SK-N-SH (cell line): ENCODE measurements at regions of chr4 and their contacts with region 1.

Region 1: DNA sequence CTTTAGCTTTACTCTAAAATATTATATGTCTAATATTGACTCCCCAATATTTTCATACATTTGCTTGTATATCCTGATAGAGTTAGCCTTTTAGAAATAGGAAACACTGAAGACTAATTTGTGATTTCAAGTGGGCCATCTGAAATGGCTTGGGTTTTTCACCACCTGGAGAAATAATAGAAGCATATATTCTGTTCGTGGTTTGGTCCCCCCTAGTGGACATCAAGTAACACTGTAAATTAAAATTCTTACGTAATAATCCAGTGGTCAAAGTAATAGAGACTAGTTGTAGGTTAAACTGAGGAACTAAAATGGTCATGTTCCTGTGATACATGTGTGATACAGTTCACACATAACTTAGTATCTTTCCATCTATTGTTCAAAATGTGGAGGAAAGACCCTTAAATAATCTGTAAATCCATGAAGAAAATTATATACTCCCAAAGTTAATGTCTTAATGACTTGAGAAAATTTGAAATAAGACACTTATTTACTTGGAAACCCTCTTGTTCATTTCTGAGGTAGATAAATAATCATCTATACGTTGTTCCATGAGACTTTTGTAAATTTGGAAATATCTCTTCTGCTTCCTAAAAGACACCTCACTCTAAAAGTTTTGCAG is 79.8 kb upstream of the SMARCAD1 start:
- DNase-seq: peak; percentile 52
- H3K4me3 ChIP-seq: no peak overlapping the region
- H3K27ac ChIP-seq: no peak overlapping the region
- H3K4me1 ChIP-seq: no peaks in the 10 kb centered on the region
- H3K27me3 ChIP-seq: no peaks in the 10 kb centered on the region
- CTCF ChIP-seq: peak; percentile 78
- EP300 ChIP-seq: no peak
- RAD21 ChIP-seq: peak; percentile 68

Region 2: DNA sequence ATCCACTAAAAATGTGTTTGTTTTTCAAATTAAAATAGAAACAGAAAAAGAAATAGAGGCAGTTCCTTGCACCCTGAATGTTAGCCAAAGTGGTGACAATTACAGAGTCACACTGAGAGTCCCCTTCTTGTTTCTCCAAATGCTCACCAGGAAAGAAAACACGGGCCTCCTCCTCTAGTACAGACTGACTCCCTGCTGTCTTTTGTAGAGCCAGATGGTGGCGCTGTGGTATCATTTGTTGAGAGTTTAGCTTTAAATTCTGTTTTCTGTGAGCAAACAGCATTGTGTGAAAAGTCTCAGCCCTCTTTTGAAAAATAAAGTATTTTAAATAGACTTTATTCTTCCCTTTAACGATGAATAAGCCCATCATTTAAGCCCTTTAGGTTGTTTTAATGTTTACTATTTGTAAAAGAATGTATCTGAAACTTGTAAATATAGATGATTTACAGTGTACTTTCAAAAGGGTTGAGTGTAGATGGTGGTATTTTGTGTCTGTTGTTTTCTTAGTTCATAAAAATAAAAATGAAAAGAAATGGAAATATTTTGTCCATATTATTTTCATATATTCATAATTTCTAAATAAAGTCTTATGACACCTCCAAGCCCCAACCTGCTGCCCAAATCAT is 336.1 kb before region 1 on chr4:
- CTCF ChIA-PET with region 1: interaction called, 81 read pairs
- POLR2A ChIA-PET with region 1: no interaction called
- DNase-seq: peak; percentile 59
- H3K4me3 ChIP-seq: no peak overlapping the region; a peak in 1 of 4 replicates
- H3K27ac ChIP-seq: no peak overlapping the region
- H3K4me1 ChIP-seq: no peaks in the 10 kb centered on the region
- H3K27me3 ChIP-seq: peaks cover 7% of the 10 kb centered on the region
- CTCF ChIP-seq: peak; percentile 93
- EP300 ChIP-seq: no peak
- RAD21 ChIP-seq: peak; percentile 95

Region 3: DNA sequence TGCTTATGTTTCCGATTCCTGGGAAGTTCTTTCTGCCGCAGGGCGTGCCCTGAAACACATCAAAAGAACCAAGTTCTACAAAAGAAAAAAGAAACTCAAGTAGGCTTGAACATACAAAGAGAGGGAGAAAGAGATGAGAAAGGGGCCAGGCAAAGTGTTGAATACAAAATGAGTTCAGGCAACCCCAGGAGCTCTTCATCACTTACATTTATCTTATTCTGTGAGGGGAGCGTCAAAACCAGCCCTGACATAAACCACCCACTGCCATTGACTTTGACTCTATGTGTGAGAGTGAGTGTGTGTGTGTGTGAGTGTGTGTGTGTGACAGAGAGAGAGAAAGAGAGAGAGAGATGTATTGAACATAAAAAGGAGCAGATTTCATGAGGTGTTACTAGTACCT is 325.7 kb before region 1 on chr4:
- CTCF ChIA-PET with region 1: interaction called, 39 read pairs
- POLR2A ChIA-PET with region 1: no interaction called
- DNase-seq: no peak
- H3K4me3 ChIP-seq: no peak overlapping the region
- H3K27ac ChIP-seq: no peak overlapping the region
- H3K4me1 ChIP-seq: no peaks in the 10 kb centered on the region
- H3K27me3 ChIP-seq: no peaks in the 10 kb centered on the region
- CTCF ChIP-seq: no peak
- EP300 ChIP-seq: no peak
- RAD21 ChIP-seq: no peak

Region 4: DNA sequence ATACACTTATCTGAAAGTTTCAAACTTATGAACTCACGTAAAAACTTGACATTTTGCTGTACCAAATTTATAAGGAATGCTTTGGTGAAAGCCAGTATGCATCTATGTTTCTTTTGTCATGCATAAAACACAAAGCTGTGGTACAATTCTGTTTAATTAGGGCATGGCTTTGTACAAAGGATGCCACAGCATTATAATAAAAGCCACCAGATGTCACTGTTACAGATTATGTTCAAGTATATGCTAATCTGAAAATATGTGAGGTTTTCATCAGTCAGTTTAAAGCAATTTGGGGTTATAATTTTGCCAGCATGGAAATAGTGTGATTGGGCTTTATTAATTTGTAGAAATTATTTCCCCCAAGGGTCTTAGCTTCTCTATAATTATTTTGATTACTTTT is 230.3 kb before region 1 on chr4:
- CTCF ChIA-PET with region 1: interaction called, 75 read pairs
- POLR2A ChIA-PET with region 1: no interaction called
- DNase-seq: peak; percentile 35
- H3K4me3 ChIP-seq: no peak overlapping the region
- H3K27ac ChIP-seq: no peak overlapping the region
- H3K4me1 ChIP-seq: no peaks in the 10 kb centered on the region
- H3K27me3 ChIP-seq: no peaks in the 10 kb centered on the region
- CTCF ChIP-seq: peak; percentile 57
- EP300 ChIP-seq: no peak
- RAD21 ChIP-seq: peak; percentile 56

Region 5: DNA sequence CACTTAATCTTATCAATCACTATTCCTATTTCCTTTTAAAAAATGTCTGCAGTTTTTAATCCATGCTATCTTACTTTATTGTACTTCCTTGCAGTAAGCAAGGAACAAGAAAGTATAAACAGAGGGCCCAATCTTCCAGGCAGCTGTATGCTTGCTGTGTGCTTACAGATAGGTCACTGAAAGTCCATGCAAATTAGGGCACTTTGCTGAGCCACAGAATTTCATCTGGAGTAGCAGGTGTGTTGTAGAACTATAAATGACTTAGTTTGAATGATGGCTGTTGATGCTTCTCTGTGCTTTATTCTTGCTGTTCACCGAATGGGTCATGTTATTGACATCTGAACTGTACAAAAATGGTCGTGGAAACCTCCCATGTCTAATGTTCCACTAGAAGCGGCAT is 144.7 kb before region 1 on chr4:
- CTCF ChIA-PET with region 1: no interaction called
- POLR2A ChIA-PET with region 1: no interaction called
- DNase-seq: no peak
- H3K4me3 ChIP-seq: no peak overlapping the region
- H3K27ac ChIP-seq: no peak overlapping the region
- H3K4me1 ChIP-seq: no peaks in the 10 kb centered on the region; a peak in 1 of 4 replicates
- H3K27me3 ChIP-seq: no peaks in the 10 kb centered on the region
- CTCF ChIP-seq: no peak
- EP300 ChIP-seq: no peak
- RAD21 ChIP-seq: no peak

Region 6: DNA sequence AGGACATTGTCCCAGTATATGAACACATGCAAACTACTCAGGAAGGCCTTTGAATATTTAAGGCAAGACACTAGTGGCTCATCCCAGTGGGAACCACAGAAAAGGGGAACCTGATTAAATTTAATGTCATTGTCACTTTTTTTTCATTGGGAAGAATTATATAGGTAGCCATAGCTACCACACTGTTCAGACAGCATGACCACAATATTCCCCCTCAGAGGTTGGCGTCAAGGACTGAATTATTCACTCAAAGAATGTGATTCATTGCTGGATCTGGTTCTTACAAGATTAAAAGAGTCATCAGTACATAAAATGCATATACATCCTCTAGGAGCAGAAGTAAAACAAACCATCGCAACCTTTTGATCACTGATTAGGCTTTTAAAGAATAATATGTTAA is 12.1 kb before region 1 on chr4:
- CTCF ChIA-PET with region 1: interaction called, 18 read pairs
- POLR2A ChIA-PET with region 1: no interaction called
- DNase-seq: no peak
- H3K4me3 ChIP-seq: no peak overlapping the region
- H3K27ac ChIP-seq: no peak overlapping the region
- H3K4me1 ChIP-seq: no peaks in the 10 kb centered on the region
- H3K27me3 ChIP-seq: no peaks in the 10 kb centered on the region
- CTCF ChIP-seq: no peak
- EP300 ChIP-seq: no peak
- RAD21 ChIP-seq: no peak